ENCODE measurements at regions of chr22 and their contacts with region 1.

Region 1: GRCh38 chr22:22080270-22080669 is 97.7 kb upstream of the TOP3B start:
- DNase-seq: no peak
- ATAC-seq: no peak
- H3K4me3 Mint-ChIP-seq: no peak overlapping the region
- H3K27ac Mint-ChIP-seq: no peak overlapping the region
- H3K4me1 Mint-ChIP-seq: peaks cover 6% of the 10 kb centered on the region
- H3K27me3 Mint-ChIP-seq: no peaks in the 10 kb centered on the region
- CTCF ChIP-seq: no peak

Region 2: DNA sequence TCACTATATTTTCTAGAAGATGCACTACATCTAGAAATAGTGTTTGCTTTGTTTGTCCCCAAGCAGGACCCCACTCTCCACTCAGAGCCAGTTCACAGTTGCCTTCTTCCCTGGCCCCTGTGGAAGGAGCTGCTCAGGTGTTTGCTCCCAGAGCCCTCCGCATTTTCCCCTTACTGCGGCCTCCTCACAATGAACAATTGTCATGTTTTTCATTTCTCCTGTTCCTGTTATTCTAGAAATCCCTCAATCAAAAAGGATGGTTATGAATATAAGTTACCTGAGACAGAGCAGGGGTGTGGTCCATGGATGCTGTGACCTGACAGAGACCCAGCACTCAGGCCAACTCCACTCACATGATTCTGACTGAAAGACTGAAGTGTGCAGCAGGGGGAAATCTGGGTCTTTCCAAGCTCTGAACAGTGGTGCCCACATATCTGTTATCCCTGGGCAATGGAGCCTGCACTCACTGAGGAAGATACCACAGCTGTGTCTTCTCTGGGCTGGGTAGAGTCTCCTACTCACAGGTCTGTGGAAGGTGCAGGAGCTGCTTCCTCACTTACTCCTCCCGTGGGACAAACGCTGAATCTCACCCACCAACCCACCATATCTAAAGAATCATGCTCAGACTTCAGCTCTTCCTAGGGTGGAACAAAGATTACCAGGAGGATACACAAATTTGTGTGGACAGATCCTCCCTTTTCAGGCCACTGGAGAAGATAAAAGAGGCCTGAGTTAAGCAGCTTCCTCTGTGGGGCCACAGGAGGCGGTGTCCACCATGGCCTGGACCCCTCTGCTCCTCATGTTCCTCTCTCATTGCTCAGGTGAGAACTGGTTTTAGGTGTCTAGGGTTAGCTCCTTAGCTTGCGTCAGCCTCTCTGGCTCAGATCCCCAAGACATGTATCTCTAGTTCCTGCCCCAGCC is 10.6 kb before region 1 on chr22:
- CTCF ChIA-PET with region 1: no interaction called
- POLR2A ChIA-PET with region 1: no interaction called
- intact Hi-C with region 1: no loop called
- DNase-seq: no peak
- ATAC-seq: peak; percentile 40
- H3K4me3 Mint-ChIP-seq: no peak overlapping the region
- H3K27ac Mint-ChIP-seq: no peak overlapping the region
- H3K4me1 Mint-ChIP-seq: peaks cover 9% of the 10 kb centered on the region
- H3K27me3 Mint-ChIP-seq: no peaks in the 10 kb centered on the region
- CTCF ChIP-seq: no peak

Region 3: GRCh38 chr22:22138915-22139314 is 58.6 kb after region 1 on chr22:
- CTCF ChIA-PET with region 1: no interaction called
- POLR2A ChIA-PET with region 1: no interaction called
- intact Hi-C with region 1: loop called (anchors 5 kb)
- DNase-seq: no peak
- ATAC-seq: no peak
- H3K4me3 Mint-ChIP-seq: no peak overlapping the region
- H3K27ac Mint-ChIP-seq: no peak overlapping the region
- H3K4me1 Mint-ChIP-seq: no peaks in the 10 kb centered on the region
- H3K27me3 Mint-ChIP-seq: no peaks in the 10 kb centered on the region
- CTCF ChIP-seq: no peak

Measured in activated B cell treated with CpG ODN at 0.5 μM for 24 hours (primary cell).